ENCODE measurements at regions of chr9 and their contacts with region 1.

Region 1: DNA sequence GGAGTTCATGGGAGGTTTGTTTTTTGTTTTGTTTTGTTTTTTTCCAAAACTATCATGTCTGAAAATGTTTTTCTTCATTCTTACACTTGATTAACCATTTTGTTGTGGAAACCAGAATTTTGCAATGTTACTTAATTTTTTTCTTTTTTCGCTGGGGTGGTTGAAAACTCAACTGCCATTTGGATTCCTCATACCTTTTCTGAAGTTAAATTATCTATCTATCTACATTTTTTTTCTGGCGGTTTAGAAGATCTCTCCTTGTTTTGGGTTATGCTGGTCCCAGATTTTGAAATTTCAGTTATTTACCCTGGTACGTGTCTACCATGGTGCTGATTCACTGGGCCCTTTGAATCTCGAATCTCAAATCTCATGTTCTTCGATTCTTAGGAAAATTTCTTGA is 316.2 kb upstream of the SMARCA2 start:
- DNase-seq: no peak
- ATAC-seq: no peak
- H3K4me3 ChIP-seq: no peak overlapping the region
- H3K27ac ChIP-seq: no peak overlapping the region
- H3K4me1 ChIP-seq: no peaks in the 10 kb centered on the region
- H3K27me3 ChIP-seq: no peaks in the 10 kb centered on the region
- CTCF ChIP-seq: no peak
- POLR2A ChIP-seq: no peak
- RAD21 ChIP-seq: no peak

Region 2: GRCh38 chr9:1718836-1719235 is 19.8 kb after region 1 on chr9:
- CTCF ChIA-PET with region 1: no interaction called
- POLR2A ChIA-PET with region 1: no interaction called
- dilution Hi-C with region 1: no loop called
- in situ Hi-C with region 1: no loop called
- intact Hi-C with region 1: loop called (anchors 1 kb)
- DNase-seq: no peak
- ATAC-seq: no peak
- H3K4me3 ChIP-seq: no peak overlapping the region
- H3K27ac ChIP-seq: no peak overlapping the region
- H3K4me1 ChIP-seq: no peaks in the 10 kb centered on the region
- H3K27me3 ChIP-seq: no peaks in the 10 kb centered on the region
- CTCF ChIP-seq: no peak
- POLR2A ChIP-seq: no peak
- RAD21 ChIP-seq: no peak